Pancreas (tissue), 10 donors: ENCODE measurements at regions of chr4 and their contacts with region 1.

Region 1: GRCh38 chr4:186669159-186669731 is 54.4 kb downstream of the FAT1 start:
- DNase-seq: no peak
- ATAC-seq: peak; percentile 57 to 82 (median 70)
- H3K4me3 ChIP-seq: no peak overlapping the region
- H3K27ac ChIP-seq: no peak overlapping the region
- H3K4me1 ChIP-seq: peaks cover 10 to 22% (median 13%) of the 10 kb centered on the region in 3 donors
- H3K27me3 ChIP-seq: no peaks in the 10 kb centered on the region
- CTCF ChIP-seq: peak in 3 of 4 donors; percentile 19 to 24 (median 21)

Region 2: DNA sequence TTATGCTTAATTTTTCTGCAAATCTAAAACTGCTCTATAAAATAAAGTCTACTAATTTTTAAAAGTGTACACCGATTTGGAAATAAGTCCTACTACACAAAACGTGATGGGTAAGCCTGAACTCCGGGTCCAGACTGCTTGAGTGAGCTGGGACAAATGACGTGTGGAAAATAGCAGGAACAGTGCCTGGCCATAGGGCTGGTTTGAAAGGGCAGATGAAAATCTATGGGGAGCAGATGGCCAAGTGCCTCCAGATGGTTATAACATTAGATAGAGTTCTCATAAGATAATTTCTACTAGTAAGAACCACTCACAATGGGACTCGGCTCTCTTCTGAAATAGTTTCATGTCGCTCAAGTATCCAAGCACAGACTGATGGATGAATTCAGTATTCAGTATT is 350.8 kb before region 1 on chr4:
- intact Hi-C with region 1: no loop called
- DNase-seq: no peak
- ATAC-seq: no peak
- H3K4me3 ChIP-seq: no peak overlapping the region
- H3K27ac ChIP-seq: no peak overlapping the region
- H3K4me1 ChIP-seq: no peaks in the 10 kb centered on the region
- H3K27me3 ChIP-seq: no peaks in the 10 kb centered on the region
- CTCF ChIP-seq: no peak

Region 3: GRCh38 chr4:186428481-186428880 is 240.8 kb before region 1 on chr4:
- intact Hi-C with region 1: no loop called
- DNase-seq: no peak
- ATAC-seq: no peak
- H3K4me3 ChIP-seq: no peak overlapping the region
- H3K27ac ChIP-seq: no peak overlapping the region
- H3K4me1 ChIP-seq: no peaks in the 10 kb centered on the region
- H3K27me3 ChIP-seq: no peaks in the 10 kb centered on the region
- CTCF ChIP-seq: no peak

Region 4: DNA sequence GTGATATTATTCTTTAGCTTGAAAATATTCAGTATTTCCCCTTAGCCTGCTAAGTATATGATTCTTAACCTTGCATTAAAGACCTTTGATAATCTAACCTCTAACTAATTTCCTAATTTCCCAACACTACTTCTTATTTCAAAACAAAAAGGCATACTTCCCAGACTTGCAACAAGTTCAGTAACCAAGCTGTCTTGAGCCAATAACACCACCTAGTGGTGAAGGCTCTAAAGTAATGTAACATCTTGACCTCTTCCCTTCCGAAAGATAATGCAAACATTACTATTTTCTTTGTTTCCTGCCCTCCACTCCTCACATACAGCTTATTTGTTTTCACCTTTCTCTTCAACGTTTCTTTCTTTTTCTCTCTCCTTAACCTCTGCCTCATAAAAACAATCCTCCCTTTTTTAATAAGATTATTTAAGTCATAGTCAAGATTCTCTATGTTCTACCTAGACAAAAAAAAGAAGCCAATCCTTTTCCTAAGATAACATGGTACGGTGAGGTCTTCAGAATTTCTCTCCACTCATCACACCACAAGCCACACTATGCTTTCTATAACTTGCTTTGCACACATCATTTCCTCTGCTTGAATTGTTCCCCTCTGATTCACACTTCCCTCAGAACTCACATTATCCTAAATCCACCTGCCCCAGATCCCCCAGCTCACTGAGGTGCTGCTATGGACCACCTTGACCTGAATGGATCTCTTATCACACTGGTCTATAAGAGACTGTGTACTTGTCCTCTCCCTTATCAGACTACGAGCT is 50.9 kb after region 1 on chr4:
- intact Hi-C with region 1: loop called in 1 of 3 experiments (anchors 10 kb)
- DNase-seq: no peak
- ATAC-seq: no peak
- H3K4me3 ChIP-seq: no peak overlapping the region
- H3K27ac ChIP-seq: no peak overlapping the region
- H3K4me1 ChIP-seq: peaks cover 0 to 8% (median 3%) of the 10 kb centered on the region in 3 donors
- H3K27me3 ChIP-seq: no peaks in the 10 kb centered on the region
- CTCF ChIP-seq: peak in 1 of 4 donors; percentile 18